PC-9 (cell line): ENCODE measurements at regions of chr17 and their contacts with region 1.

Region 1: GRCh38 chr17:31900877-31901276 is 631 bp downstream of the UTP6 start:
- DNase-seq: peak in 1 of 2 experiments; percentile 3
- H3K4me3 ChIP-seq: peak overlapping the region; percentile 88
- H3K27ac ChIP-seq: peak overlapping the region; percentile 57
- H3K4me1 ChIP-seq: peaks cover 8% of the 10 kb centered on the region; the same call in 1 of the 2 replicates
- H3K27me3 ChIP-seq: no peaks in the 10 kb centered on the region
- CTCF ChIP-seq: no peak

Region 2: GRCh38 chr17:31122746-31123145 is 778.1 kb before region 1 on chr17:
- CTCF ChIA-PET with region 1: no interaction called
- POLR2A ChIA-PET with region 1: interaction called, 39 read pairs
- intact Hi-C with region 1: no loop called
- DNase-seq: no peak
- H3K4me3 ChIP-seq: no peak overlapping the region
- H3K27ac ChIP-seq: no peak overlapping the region
- H3K4me1 ChIP-seq: no peaks in the 10 kb centered on the region
- H3K27me3 ChIP-seq: no peaks in the 10 kb centered on the region
- CTCF ChIP-seq: no peak

Region 3: DNA sequence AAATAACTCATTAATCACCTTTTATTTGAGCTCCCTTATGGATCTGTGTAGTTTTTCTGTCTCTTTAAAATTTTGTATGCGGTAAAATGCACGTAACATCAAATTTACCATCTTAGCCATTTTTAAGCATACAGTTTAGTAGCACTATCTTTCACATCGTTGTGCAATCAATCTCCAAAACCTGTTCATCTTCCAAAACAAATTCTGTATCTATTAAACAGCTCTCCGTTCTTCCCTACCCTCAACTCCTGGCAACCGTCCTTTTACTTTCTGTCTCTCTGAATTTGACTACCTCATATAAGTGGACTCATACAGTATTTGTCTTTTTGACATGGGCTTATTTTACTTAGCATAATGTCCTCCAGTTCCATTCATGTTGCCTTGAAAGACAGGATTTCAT is 705.6 kb before region 1 on chr17:
- CTCF ChIA-PET with region 1: no interaction called
- POLR2A ChIA-PET with region 1: interaction called, 39 read pairs
- intact Hi-C with region 1: no loop called
- DNase-seq: no peak
- H3K4me3 ChIP-seq: no peak overlapping the region
- H3K27ac ChIP-seq: no peak overlapping the region
- H3K4me1 ChIP-seq: peaks cover 5% of the 10 kb centered on the region; the same call in 1 of the 2 replicates
- H3K27me3 ChIP-seq: no peaks in the 10 kb centered on the region
- CTCF ChIP-seq: no peak

Region 4: DNA sequence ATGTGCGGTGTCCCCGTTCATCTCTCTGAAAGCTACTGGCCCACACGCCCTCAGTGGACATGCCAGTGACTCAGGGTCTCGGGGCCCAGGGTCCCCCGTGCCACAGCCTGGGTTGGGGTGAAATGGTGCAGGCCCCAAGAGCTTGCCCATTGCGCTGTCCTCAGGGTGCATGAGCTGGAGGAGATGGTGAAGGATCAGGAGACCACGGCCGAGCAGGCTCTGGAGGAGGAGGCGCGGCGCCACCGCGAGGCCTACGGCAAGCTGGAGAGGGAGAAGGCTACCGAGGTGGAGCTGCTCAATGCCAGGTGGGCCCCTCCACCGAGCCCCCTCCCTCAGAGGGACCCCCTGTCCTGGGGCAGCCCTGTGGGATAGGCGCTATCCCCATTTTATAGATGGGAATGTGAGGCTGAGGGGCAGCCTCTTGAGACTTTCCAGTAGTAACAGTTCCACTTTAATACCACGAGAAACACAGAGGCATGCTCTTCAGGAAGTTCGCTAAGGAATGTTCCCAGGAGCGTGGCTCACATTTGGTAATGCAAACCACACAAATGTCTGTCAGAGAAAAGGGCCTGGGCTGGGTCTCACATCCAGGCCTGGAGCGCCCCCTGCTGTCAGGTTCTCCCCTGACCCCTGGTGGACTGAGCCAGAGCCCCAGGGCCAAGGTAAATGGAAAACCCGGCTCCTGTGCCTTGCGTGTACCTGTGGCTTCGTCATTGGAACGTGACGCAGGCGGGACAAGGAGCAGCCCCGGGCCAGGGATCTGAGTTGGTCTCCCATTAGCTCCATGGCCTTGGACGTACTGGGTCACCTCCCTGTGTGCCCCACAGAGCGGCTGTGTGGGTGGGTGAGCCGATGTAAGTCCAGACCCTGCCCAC is 375.7 kb before region 1 on chr17:
- CTCF ChIA-PET with region 1: interaction called, 10 read pairs
- POLR2A ChIA-PET with region 1: no interaction called
- intact Hi-C with region 1: no loop called
- DNase-seq: peak; percentile 85 to 88
- H3K4me3 ChIP-seq: no peak overlapping the region
- H3K27ac ChIP-seq: no peak overlapping the region
- H3K4me1 ChIP-seq: peaks cover 5% of the 10 kb centered on the region; the same call in 1 of the 2 replicates
- H3K27me3 ChIP-seq: no peaks in the 10 kb centered on the region
- CTCF ChIP-seq: peak; percentile 94

Region 5: DNA sequence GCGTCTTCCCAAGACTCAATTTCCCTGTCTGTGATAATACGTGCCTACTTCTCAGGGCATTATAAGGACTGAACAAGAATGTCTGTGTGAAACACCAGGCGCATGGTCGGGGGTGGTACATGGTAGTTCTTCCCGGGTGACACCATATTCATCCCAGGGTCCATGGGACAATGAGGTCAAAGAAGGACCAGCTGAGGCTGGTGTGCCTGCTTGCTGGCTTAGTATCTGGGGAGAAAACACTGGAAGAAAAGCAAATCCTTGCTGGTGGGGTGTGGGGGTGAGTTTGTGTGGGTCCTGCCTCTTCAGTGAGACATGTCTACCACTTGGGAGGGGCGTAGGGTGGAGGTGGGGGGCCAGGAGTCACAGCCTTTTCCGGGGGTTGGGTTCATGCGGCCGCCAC is 335.2 kb before region 1 on chr17:
- CTCF ChIA-PET with region 1: interaction called, 20 read pairs
- POLR2A ChIA-PET with region 1: no interaction called
- intact Hi-C with region 1: no loop called
- DNase-seq: no peak
- H3K4me3 ChIP-seq: no peak overlapping the region
- H3K27ac ChIP-seq: peak overlapping the region; percentile 51; the same call in 1 of the 2 replicates
- H3K4me1 ChIP-seq: peaks cover 65% of the 10 kb centered on the region
- H3K27me3 ChIP-seq: no peaks in the 10 kb centered on the region
- CTCF ChIP-seq: no peak

Region 6: GRCh38 chr17:31869797-31870568 is 30.9 kb before region 1 on chr17:
- CTCF ChIA-PET with region 1: no interaction called
- POLR2A ChIA-PET with region 1: no interaction called
- intact Hi-C with region 1: no loop called
- DNase-seq: no peak
- H3K4me3 ChIP-seq: no peak overlapping the region
- H3K27ac ChIP-seq: no peak overlapping the region
- H3K4me1 ChIP-seq: no peaks in the 10 kb centered on the region
- H3K27me3 ChIP-seq: no peaks in the 10 kb centered on the region
- CTCF ChIP-seq: no peak

Region 7: GRCh38 chr17:31888124-31888523 is 12.8 kb before region 1 on chr17:
- CTCF ChIA-PET with region 1: interaction called, 3 read pairs
- POLR2A ChIA-PET with region 1: interaction called, 53 read pairs
- intact Hi-C with region 1: no loop called
- DNase-seq: no peak
- H3K4me3 ChIP-seq: no peak overlapping the region
- H3K27ac ChIP-seq: no peak overlapping the region
- H3K4me1 ChIP-seq: no peaks in the 10 kb centered on the region
- H3K27me3 ChIP-seq: no peaks in the 10 kb centered on the region
- CTCF ChIP-seq: no peak